ENCODE measurements at regions of chr12 and their contacts with region 1.

Region 1: DNA sequence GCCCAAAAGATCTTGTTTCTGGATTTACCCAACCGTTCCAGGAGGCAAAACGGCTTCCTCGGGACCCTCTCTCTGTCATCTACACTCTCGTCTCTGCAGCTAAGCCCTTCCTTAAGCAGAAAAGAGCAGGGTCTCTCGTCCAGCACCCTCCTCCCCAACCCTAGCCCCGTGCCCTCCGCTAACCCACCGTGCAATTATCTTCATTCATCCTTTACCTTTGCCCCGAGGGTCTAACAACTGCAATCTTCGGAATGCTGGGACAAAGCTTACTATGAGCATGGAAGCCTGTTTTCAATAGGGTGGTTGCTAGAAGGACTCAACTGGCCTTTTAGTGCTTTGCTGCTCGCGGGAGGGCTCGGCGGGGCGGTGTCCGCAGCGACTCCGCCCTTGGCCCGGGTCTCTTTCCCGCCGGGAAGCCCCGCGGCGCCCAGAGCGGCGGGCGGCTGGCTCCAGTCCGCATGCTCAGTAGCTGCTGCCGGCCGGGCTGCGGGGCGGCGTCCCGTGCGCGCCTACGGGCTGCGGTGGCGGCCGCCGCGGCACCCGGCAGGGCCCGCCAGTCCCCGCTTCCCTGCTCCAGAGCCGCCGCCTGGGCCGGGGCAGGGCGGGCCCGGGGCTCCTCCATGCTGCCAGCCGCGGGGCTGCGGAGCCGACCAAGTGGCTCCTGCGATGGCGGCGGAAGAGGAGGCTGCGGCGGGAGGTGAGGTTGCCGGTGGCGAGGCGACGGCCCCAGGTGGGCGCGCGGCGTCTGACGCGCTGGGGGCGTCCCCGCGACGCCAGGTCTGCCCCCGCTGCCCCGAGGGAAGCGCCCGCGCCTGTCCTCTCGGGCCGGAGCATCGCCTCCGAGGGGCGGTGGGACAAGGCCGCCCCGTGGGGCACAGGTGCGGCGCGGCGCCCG is at the start of gene BMAL2:
- DNase-seq: peak; percentile 40
- H3K4me3 Mint-ChIP-seq: peak within 1 kb of the TSS; percentile 98
- H3K27ac Mint-ChIP-seq: peak within 1 kb of the TSS; percentile 96
- H3K4me1 Mint-ChIP-seq: peaks cover 50% of the 10 kb centered on the region
- H3K27me3 Mint-ChIP-seq: no peaks in the 10 kb centered on the region
- total RNA-seq, gene BMAL2: 58.9 and 59.6 TPM in 2 replicates

Region 2: GRCh38 chr12:26748741-26749431 is 583.8 kb before region 1 on chr12:
- intact Hi-C with region 1: loop called (anchors 5 kb)
- DNase-seq: no peak
- H3K4me3 Mint-ChIP-seq: peak overlapping the region; percentile 42
- H3K27ac Mint-ChIP-seq: peak overlapping the region; percentile 65
- H3K4me1 Mint-ChIP-seq: peaks cover 57% of the 10 kb centered on the region
- H3K27me3 Mint-ChIP-seq: no peaks in the 10 kb centered on the region

Region 3: GRCh38 chr12:26937875-26938700 is 394.6 kb before region 1 on chr12 and contains the starts of genes FGFR1OP2 and INTS13:
- intact Hi-C with region 1: loop called (anchors 1 kb)
- DNase-seq: peak; percentile 96
- H3K4me3 Mint-ChIP-seq: peak within 1 kb of the TSS; percentile 94
- H3K27ac Mint-ChIP-seq: peak within 1 kb of the TSS; percentile 94
- H3K4me1 Mint-ChIP-seq: peaks cover 62% of the 10 kb centered on the region
- H3K27me3 Mint-ChIP-seq: no peaks in the 10 kb centered on the region
- total RNA-seq, gene FGFR1OP2: 48.4 and 49.0 TPM in 2 replicates
- total RNA-seq, gene INTS13: 54.4 and 65.7 TPM in 2 replicates

Region 4: GRCh38 chr12:26971963-26972362 is 360.7 kb before region 1 on chr12:
- intact Hi-C with region 1: no loop called
- DNase-seq: peak; percentile 14
- H3K4me3 Mint-ChIP-seq: no peak overlapping the region
- H3K27ac Mint-ChIP-seq: peak overlapping the region; percentile 29
- H3K4me1 Mint-ChIP-seq: peaks cover 16% of the 10 kb centered on the region
- H3K27me3 Mint-ChIP-seq: no peaks in the 10 kb centered on the region

Region 5: DNA sequence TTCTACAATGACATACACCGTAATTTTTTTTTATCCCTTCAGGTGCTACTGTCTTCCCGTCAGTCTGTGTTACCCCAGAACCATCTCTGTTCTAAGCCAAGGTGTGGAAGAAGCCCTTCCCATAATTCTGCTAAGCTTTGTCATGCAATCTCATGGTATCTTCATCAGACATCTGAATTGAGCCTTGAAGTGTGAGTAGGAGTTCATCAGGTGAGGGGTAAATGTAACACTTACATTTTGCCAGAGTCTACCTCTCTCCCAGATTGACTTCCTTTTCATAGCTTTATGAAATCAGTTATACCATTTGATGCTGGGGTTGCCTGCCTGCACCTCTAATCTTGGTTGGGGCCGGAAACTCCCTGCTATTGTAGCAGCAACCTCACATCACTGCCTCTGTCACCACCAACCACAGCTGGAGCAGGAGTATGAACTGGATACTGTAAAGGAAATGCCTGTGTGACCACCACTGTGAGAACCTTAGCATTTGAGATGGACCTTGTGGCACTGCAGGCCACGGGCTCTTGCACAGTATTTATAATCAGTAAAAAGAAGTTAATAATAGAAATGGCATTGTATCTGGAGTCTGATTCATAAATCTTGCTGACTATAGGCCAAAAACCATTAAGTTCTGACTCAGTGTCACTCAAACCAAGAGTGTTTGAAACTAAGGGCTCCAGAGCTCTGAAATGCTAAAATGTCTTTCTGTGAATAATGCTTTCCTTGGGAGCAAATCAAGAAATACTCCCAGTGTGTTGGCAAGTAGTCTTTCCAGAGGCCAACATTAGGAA is 147.2 kb before region 1 on chr12:
- intact Hi-C with region 1: loop called (anchors 2 kb)
- DNase-seq: peak; percentile 44
- H3K4me3 Mint-ChIP-seq: no peak overlapping the region
- H3K27ac Mint-ChIP-seq: peak overlapping the region; percentile 62
- H3K4me1 Mint-ChIP-seq: peaks cover 27% of the 10 kb centered on the region
- H3K27me3 Mint-ChIP-seq: no peaks in the 10 kb centered on the region

Region 6: DNA sequence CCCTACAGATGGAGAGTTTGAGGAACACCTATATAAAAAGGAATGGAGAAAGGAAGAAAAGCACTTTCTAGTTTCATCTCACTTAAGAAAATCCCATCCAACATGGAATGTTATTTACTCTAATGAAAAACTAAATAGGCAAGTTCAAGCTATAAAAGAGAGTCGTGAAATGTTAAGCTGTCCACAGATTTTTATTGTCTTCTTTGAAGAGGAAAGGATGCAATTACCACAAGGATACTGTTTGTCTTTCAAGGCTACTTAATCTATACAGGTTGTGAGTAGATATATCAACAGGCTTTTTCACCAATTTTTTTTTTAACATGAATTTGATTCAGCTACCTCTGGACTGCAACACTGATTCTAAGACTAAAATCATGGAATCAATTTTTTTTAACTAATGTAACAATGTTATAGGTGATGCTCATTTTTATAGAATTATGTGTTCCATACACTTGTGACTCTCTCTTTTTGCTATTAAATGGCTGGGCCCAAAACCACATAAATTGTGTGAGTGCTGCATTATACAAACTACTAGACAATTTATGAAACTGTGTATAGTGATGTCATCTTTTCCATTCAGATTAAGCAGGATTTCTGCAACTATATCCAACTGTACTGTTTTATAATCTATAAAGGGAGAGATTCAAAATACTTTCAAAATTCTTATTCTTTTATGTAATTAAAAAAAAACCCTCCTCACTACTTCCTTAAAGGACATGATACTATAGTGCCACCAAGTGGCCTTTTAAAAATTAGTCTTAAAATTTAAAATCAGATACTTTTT is 26.8 kb before region 1 on chr12:
- intact Hi-C with region 1: loop called (anchors 2 kb)
- DNase-seq: no peak
- H3K4me3 Mint-ChIP-seq: no peak overlapping the region
- H3K27ac Mint-ChIP-seq: peak overlapping the region; percentile 28
- H3K4me1 Mint-ChIP-seq: peaks cover 17% of the 10 kb centered on the region
- H3K27me3 Mint-ChIP-seq: no peaks in the 10 kb centered on the region

Region 7: GRCh38 chr12:27462151-27462694 is 129.6 kb after region 1 on chr12:
- intact Hi-C with region 1: loop called (anchors 1 kb)
- DNase-seq: no peak
- H3K4me3 Mint-ChIP-seq: peak overlapping the region; percentile 1
- H3K27ac Mint-ChIP-seq: peak overlapping the region; percentile 72
- H3K4me1 Mint-ChIP-seq: peaks cover 53% of the 10 kb centered on the region
- H3K27me3 Mint-ChIP-seq: no peaks in the 10 kb centered on the region

Region 8: GRCh38 chr12:27534060-27534764 is 201.6 kb after region 1 on chr12:
- intact Hi-C with region 1: loop called (anchors 1 kb)
- DNase-seq: peak; percentile 19
- H3K4me3 Mint-ChIP-seq: peak overlapping the region; percentile 6
- H3K27ac Mint-ChIP-seq: peak overlapping the region; percentile 62
- H3K4me1 Mint-ChIP-seq: peaks cover 43% of the 10 kb centered on the region
- H3K27me3 Mint-ChIP-seq: peaks cover 3% of the 10 kb centered on the region

Measured in activated T-helper 2 cell treated with anti-CD3 and anti-CD28 coated beads, Interferon-gamma antibody, Interleukin-2, Interleukin-4, amounts not matched to agents 10 μg/mL and 5 μg/mL and 100 μg/mL, durations not matched to agents 14 hours and 24 hours and 36 hours (primary cell).